HEK293T (cell line): ENCODE measurements at regions of chrX and their contacts with region 1.

Region 1: DNA sequence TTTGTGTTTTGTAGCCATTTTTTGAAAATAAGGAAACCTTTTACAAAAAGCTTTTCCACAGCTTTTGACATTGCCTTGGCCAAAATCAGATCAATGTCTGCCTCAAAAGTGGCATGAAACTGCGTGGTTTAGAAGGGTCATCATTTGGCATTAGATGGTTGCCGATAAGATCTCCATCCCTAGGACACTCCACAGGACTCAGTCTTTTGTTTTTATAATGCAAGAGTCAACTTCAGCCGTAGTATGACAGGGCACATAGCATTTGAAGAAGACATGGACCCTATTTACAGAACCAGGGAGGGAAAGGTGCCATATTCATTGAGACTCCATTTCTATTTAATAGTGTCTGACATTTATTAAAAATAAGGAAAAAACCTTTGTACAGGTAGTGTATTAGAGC is 1.3 kb downstream of the RTL8A start:
- DNase-seq: no peak

Region 2: GRCh38 chrX:135024526-135024925 is 26.1 kb before region 1 on chrX:
- CTCF ChIA-PET with region 1: interaction called, 4 read pairs
- POLR2A ChIA-PET with region 1: interaction called, 23 read pairs
- DNase-seq: no peak